ENCODE measurements at regions of chr2 and their contacts with region 1.

Region 1: DNA sequence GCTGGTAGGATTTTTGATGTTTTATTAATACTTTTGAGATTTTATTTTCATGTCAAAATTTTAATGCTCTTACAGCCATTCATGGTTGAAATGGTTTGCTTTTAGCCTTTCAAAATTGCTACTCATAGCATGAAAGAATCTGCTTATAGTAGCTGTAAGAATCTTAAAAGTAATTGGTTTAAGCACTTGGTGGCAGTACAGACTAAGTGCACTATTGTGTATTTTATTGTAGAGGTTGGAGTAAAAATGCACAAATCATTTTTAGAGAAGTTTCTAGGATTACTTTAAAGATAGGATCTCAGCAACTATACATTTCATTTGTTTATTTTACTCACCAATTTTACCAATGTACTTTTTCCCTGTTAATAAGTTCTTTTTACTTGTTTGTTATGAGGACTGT is 205.8 kb downstream of the SPAG16 start:
- DNase-seq: no peak
- H3K4me3 Mint-ChIP-seq: no peak overlapping the region
- H3K27ac Mint-ChIP-seq: no peak overlapping the region
- H3K4me1 Mint-ChIP-seq: no peaks in the 10 kb centered on the region
- H3K27me3 Mint-ChIP-seq: no peaks in the 10 kb centered on the region
- CTCF ChIP-seq: no peak

Region 2: DNA sequence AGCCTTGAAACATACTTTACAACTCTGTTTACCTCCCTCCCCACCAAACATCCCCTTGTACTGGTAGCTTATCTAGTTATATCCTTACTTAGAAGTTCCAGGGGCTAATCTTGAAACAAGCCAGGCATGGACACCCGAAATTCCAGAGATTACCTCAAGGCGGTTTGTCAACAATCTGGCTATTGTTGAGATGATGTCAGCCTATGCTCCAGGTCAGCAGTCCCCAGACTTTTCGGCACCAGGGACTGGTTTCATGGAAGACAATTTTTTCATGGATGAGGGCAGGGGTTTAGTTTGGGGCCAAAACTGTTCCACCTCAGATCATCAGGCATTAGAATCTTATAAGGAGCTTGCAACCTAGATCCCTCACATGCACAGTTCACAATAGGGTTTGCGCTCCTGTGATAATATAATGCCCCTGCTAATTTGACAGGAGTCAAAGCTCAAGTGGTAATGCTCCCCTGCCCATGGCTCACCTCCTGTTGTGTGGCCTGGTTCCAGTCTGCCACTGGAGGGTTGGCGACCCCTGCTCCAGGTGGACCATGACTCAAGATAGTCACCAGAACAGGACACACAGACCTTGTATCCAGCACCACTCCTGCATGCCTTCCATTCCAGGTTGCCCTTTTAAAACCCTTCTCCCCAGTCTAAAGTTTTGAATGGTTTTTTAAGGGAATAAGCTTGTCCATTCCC is 34.6 kb before region 1 on chr2:
- CTCF ChIA-PET with region 1: no interaction called
- intact Hi-C with region 1: no loop called
- DNase-seq: peak; percentile 4
- H3K4me3 Mint-ChIP-seq: no peak overlapping the region
- H3K27ac Mint-ChIP-seq: no peak overlapping the region
- H3K4me1 Mint-ChIP-seq: peaks cover 37% of the 10 kb centered on the region
- H3K27me3 Mint-ChIP-seq: no peaks in the 10 kb centered on the region
- CTCF ChIP-seq: no peak

Region 3: DNA sequence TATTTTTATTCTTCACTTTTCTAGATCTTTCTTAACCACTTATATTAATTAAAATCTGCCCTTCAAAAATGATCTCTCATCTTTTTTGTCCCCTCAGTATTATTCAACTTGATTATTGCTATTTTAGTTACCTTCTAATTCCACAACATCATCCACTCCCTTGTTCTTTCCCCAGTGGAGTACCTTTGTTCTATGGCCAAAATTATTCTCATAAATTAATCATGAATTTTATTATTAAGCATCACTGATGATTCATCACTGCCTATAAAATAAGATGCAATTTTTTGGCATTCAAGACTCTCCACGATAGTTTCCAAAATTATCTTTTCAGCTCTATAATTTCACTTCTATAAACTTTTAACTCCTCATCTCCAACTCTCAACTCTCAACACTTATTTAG is 299.9 kb after region 1 on chr2:
- CTCF ChIA-PET with region 1: no interaction called
- intact Hi-C with region 1: loop called (anchors 1 kb)
- DNase-seq: no peak
- H3K4me3 Mint-ChIP-seq: no peak overlapping the region
- H3K27ac Mint-ChIP-seq: no peak overlapping the region
- H3K4me1 Mint-ChIP-seq: no peaks in the 10 kb centered on the region
- H3K27me3 Mint-ChIP-seq: no peaks in the 10 kb centered on the region
- CTCF ChIP-seq: no peak

Measured in Calu3 (cell line).